Ovary (tissue), 10 donors: ENCODE measurements at regions of chr18 and their contacts with region 1.

Region 1: DNA sequence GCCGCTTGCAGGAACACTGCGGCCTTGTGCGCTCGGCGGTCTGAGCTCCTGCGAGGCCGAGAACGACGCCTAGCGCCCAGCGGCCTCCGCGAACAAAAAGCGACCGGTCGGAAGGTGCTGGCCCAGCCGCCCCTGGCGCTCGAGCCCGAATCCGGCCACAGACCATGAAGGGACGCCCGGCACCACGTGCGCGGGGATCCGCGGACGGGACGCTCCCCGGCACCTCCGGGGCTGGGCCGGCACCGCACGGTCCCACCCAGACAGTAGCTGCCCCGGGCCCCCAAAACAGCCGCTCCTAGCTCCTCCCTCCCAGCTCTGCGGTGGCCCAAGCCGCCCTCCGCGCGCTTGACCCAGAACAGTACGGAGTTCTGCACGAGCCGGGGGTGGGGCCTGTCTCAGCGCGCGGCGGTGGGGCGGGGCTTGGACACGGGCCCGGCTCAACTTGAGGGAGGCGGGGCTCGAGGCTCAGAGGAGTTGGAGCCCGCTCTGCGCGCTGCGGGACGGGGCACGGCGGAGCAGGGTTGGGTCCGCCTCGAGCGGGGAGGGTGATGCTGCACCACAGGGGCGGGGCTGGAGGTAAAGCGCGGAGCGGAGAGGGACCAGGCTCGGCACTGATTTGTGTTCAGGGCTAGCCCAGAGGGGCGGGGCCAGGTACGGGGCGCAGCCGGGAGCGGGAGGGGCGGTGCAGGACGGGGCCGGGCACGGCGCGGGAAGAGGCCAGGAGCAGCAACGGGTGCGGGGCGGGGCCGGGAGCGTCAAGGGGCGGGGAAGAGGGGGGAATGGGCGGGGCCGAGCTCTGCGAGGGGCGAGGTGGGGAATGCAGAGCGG is 538 bp upstream of the IMPA2 start:
- DNase-seq: peak; percentile 97 to 99 (median 98)
- H3K4me3 ChIP-seq: peak overlapping the region; percentile 92
- H3K27ac ChIP-seq: peak overlapping the region; percentile 72 to 99
- H3K4me1 ChIP-seq: no peaks in the 10 kb centered on the region
- H3K27me3 ChIP-seq: no peaks in the 10 kb centered on the region
- CTCF ChIP-seq: peak in 2 of 3 donors; percentile 29 to 34
- EP300 ChIP-seq: no peak
- POLR2A ChIP-seq: peak; percentile 83

Region 2: DNA sequence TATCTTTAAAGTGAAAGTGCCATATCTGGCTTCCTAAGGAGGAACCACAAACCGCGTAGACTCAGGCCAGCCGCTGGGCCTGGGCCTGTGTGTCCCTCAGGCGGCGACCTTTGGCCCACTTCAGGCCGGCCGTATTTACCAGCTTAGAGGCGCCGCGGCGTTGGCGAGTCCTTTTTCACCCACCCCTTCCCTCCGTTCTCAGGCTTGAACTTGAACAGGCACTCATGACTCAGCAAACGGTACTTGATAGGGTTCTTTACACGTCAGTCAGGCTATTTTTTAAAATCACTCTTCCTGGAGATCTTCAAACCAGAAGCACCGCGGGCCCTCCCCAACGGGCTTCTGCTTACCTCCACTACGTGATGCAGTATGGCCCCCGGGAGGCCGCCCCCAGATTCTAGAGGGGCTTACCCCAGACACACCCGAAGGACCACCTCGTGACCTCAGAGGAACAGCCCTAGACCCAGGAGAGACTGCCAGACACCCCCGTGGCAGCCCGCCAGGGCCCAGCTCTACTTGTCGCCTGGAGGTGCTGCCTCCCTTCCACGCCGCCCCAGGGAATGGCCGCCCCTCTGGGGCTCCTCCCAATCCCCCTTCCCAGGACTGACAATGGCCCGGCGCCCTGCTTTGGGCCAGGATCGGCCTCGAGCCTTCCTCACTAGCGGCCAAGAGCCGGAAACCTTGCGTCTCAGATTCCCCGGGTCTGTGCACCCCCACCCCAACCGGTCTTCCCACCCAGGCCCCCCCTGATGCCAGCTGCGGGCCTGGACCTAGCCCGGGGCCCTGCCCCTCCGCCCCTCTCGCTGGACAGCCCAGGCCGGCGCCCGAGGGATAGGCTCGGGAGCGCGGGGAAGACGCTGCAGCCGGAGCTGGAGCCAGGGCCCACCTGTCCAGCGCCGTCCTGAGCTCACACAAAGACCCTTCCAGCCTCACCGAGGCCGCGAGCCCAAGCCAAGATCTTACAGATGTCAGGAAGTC is 33.3 kb before region 1 on chr18:
- intact Hi-C with region 1: loop called in 3 of 4 experiments (anchors 2 to 5 kb)
- DNase-seq: peak; percentile 88 to 95 (median 92)
- H3K4me3 ChIP-seq: peak overlapping the region; percentile 48
- H3K27ac ChIP-seq: peak overlapping the region; percentile 91 to 95
- H3K4me1 ChIP-seq: no peaks in the 10 kb centered on the region
- H3K27me3 ChIP-seq: no peaks in the 10 kb centered on the region
- CTCF ChIP-seq: no peak
- EP300 ChIP-seq: peak; percentile 9
- POLR2A ChIP-seq: peak; percentile 72